ENCODE measurements at regions of chr15 and their contacts with region 1.

Region 1: DNA sequence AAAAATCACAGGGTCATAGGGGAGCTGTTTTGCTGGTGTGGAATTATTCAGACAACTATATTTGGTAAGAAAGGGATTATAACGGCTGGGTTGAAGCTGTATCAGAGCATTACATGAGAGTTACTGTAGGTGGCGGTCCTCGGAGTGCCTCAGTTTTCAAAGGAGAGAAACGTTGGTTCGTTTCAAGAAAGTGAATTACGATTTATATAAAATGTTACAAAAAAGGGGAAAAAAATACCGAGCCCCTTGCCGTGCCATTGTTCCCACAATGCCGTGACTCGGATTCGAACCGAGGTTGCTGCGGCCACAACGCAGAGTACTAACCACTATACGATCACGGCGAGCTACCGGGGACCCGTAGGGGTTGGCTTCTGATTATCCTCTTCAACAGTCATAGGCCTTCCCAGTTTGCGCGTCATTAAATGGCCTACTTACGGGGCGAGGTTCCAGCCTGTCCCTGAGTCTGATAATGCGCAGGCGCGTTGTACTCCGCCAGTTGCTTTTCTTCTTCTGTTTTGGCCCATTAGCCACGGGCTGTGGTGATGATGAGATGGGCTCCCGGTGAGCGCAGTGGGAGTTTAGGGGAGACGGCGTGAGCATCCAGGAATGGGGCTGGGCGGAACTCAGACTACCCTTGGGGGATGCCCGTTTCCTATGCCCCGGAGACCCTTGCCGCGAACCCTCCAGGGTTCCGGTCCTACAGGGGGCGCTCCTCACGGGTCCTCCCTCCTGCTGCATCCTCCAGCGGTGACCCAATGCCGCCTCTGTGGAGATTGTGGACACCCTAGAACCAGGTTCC is 10.8 kb upstream of the SHF start:
- DNase-seq: peak; percentile 83 to 98 (median 97)
- H3K4me3 ChIP-seq: peak overlapping the region; percentile 94
- H3K4me3 Mint-ChIP-seq: no peak overlapping the region
- H3K27ac ChIP-seq: peak overlapping the region; percentile 94
- H3K27ac Mint-ChIP-seq: peak overlapping the region in 1 of 8 donors; percentile 60
- H3K4me1 ChIP-seq: peaks cover 16% of the 10 kb centered on the region
- H3K4me1 Mint-ChIP-seq: peaks cover 4 to 19% (median 13%) of the 10 kb centered on the region in 3 donors
- H3K27me3 ChIP-seq: no peaks in the 10 kb centered on the region
- H3K27me3 Mint-ChIP-seq: peaks cover 0 to 13% of the 10 kb centered on the region in 2 donors

Region 2: GRCh38 chr15:45179221-45179985 is 19.1 kb before region 1 on chr15:
- CTCF ChIA-PET with region 1: interaction called, 19 read pairs
- POLR2A ChIA-PET with region 1: interaction called, 3 read pairs
- DNase-seq: peak; percentile 33 to 73 (median 38)
- H3K4me3 ChIP-seq: no peak overlapping the region
- H3K4me3 Mint-ChIP-seq: no peak overlapping the region
- H3K27ac ChIP-seq: no peak overlapping the region
- H3K27ac Mint-ChIP-seq: peak overlapping the region in 4 of 8 donors; percentile 16 to 40 (median 22)
- H3K4me1 ChIP-seq: peaks cover 7% of the 10 kb centered on the region
- H3K4me1 Mint-ChIP-seq: peaks cover 11 to 15% (median 14%) of the 10 kb centered on the region in 3 donors
- H3K27me3 ChIP-seq: no peaks in the 10 kb centered on the region
- H3K27me3 Mint-ChIP-seq: no peaks in the 10 kb centered on the region

Region 3: DNA sequence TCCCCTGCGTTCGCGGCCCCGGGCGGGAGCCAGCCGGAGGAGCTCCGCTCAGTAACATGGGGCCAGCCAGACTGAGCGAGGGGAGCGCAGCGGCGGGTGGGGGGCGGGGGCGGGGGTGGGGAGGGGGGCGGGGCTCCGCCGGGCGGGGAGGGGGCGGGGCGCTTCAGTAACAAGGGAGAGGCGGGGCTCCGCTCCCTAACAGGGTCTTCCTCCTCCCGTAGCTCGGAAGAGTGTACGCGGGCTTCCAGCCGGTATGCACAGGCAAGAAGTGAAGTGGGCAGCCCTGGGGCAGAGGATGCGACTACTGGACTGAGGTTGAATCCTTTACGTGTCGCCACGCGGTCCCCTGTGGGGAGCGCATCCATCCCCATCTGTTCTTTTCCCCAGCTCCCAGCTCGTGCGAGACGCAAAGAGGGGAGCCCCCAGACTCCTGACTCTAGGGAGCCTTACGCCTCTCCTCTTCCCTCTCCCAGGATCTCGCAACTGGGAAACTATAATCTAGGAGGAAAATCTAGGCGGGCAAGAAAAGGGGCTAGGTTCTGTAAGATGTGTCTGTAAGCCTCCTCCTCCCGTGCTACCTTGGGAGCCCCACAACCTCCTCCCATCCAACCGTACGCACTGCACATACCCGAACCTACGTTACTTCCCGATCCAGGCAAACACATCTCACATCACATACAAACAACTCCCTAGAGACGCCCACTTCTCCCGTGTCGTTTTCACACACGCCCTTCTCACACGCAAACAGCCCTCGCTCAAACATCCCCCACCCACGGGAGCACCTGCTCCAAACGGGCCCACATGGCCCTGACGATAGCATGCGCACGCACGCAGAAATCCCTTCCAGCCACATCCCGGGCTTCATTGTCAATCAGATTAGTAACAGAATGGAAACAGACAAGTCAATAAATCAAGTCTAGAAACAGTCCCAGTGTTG is 10.4 kb before region 1 on chr15 and contains the start of gene SHF:
- CTCF ChIA-PET with region 1: interaction called, 9 read pairs
- POLR2A ChIA-PET with region 1: interaction called, 10 read pairs
- DNase-seq: peak; percentile 44 to 75 (median 53)
- H3K4me3 ChIP-seq: peak within 1 kb of the TSS; percentile 65
- H3K4me3 Mint-ChIP-seq: peak within 1 kb of the TSS; percentile 84 to 96 (median 93)
- H3K27ac ChIP-seq: peak within 1 kb of the TSS; percentile 41
- H3K27ac Mint-ChIP-seq: peak within 1 kb of the TSS; percentile 59 to 96 (median 87)
- H3K4me1 ChIP-seq: peaks cover 11% of the 10 kb centered on the region
- H3K4me1 Mint-ChIP-seq: peaks cover 11 to 21% (median 15%) of the 10 kb centered on the region in 3 donors
- H3K27me3 ChIP-seq: no peaks in the 10 kb centered on the region
- H3K27me3 Mint-ChIP-seq: peaks cover 13 to 14% of the 10 kb centered on the region in 2 donors
- total RNA-seq, gene SHF: 25.4 to 29.5 TPM

Measured in CD8-positive, alpha-beta memory T cell (primary cell).